ENCODE measurements at regions of chr1 and their contacts with region 1.

Region 1: GRCh38 chr1:175035865-175036264 is 12.6 kb upstream of the MRPS14 start:
- DNase-seq: no peak
- ATAC-seq: no peak
- H3K4me3 ChIP-seq: no peak overlapping the region
- H3K27ac ChIP-seq: no peak overlapping the region
- H3K4me1 ChIP-seq: no peaks in the 10 kb centered on the region
- H3K27me3 ChIP-seq: no peaks in the 10 kb centered on the region
- CTCF ChIP-seq: no peak
- POLR2A ChIP-seq: no peak
- RAD21 ChIP-seq: no peak

Region 2: GRCh38 chr1:175124861-175125260 is 89.0 kb after region 1 on chr1:
- CTCF ChIA-PET with region 1: interaction called, 13 read pairs
- POLR2A ChIA-PET with region 1: no interaction called
- RAD21 ChIA-PET with region 1: no interaction called
- intact Hi-C with region 1: no loop called
- DNase-seq: no peak
- ATAC-seq: no peak
- H3K4me3 ChIP-seq: no peak overlapping the region
- H3K27ac ChIP-seq: no peak overlapping the region
- H3K4me1 ChIP-seq: no peaks in the 10 kb centered on the region
- H3K27me3 ChIP-seq: no peaks in the 10 kb centered on the region
- CTCF ChIP-seq: no peak
- POLR2A ChIP-seq: no peak
- RAD21 ChIP-seq: no peak